K562 (cell line): ENCODE measurements at regions of chr15 and their contacts with region 1.

Region 1: DNA sequence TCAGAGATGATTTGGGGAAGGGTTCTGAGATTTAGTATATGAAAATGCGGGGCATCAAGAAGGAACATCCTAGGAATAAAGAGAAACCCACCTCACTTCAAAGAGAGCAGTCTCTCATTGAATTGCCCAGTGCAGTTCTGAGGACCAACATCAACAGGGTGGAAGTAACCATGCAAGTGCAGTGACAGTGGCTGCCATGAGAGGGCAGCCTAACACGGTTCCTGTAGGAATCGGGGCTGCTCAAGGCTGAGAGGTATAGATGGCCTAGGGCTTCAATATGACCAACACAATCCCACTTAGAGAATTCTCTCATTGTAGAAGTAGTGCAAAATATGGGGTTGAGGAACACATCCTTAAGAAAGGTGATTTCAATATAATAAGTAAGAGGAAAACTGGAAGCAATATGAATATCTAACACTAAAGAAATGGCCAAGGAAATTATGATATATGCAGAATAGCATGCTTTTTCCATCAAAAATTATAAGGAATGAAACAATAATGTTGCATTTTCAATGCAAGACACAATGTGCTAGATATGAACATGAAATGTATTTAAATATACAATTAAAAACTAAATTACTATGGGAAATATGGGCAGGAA is 51.1 kb upstream of the ARRDC4 start:
- DNase-seq: peak; percentile 63 to 76 (median 68)
- ATAC-seq: peak; percentile 99
- H3K4me3 ChIP-seq: no peak overlapping the region
- H3K27ac ChIP-seq: no peak overlapping the region
- H3K4me1 ChIP-seq: no peaks in the 10 kb centered on the region
- H3K27me3 ChIP-seq: peaks cover 18 to 21% of the 10 kb centered on the region in 2 experiments
- CTCF ChIP-seq: peak; percentile 81 to 88 (median 86)
- EP300 ChIP-seq: no peak
- POLR2A ChIP-seq: no peak
- RAD21 ChIP-seq: peak; percentile 85 to 91

Region 2: DNA sequence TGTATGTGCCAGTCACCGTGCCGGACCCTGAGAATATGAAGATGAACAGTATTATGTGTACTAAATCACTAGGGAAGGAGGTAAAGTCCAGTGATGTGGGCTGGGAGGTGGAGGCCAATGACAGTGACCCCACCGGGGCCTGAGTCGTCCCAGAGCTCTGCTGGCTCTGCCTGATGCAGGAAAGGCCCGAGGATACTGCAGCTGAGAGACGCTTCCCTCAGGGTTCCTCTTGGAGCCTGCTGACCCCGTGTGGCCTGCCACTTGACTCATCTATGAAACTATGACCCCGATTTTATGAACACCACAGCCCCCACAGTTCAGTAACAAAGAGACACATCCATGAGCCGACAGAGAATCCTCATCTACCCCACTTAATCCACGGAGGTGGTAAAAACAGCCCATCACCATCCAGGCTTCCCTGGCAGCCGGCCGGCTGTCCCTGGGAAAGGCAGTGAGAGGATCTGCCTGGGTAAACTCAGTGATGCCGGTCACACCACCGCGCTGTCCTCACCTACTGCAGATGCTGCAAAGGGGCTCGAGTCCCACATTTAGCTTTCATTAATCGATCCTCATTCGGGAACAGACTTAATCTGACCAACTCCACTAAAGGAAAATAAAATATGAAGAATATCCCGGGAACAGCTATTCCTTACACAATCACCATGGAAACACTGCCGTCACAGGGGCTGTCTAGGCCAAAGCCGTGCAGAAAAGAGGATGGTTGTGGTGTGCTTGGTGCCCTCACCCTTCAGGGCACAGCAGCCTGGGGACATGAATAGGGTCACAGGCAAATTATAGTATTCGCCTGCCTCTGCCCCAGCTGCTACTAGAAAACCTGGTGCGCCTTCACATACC is 134.0 kb after region 1 on chr15:
- CTCF ChIA-PET with region 1: interaction called, 4 read pairs
- POLR2A ChIA-PET with region 1: no interaction called
- in situ Hi-C with region 1: no loop called
- intact Hi-C with region 1: loop called (anchors 5 kb)
- DNase-seq: peak in 1 of 4 experiments; percentile 4
- ATAC-seq: 0 out of 3 replicates have a peak, but pooled peaks have one; percentile 37
- H3K4me3 ChIP-seq: no peak overlapping the region
- H3K27ac ChIP-seq: no peak overlapping the region
- H3K4me1 ChIP-seq: no peaks in the 10 kb centered on the region
- H3K27me3 ChIP-seq: peaks cover 0 to 6% of the 10 kb centered on the region in 2 experiments; a peak in 3 of 5 replicates
- CTCF ChIP-seq: peak in 2 of 3 experiments; percentile 10 to 21; a peak in 1 of 6 replicates
- EP300 ChIP-seq: no peak
- POLR2A ChIP-seq: no peak
- RAD21 ChIP-seq: peak in 1 of 2 experiments; percentile 37; a peak in 2 of 4 replicates

Region 3: GRCh38 chr15:98177924-98178592 is 268.7 kb after region 1 on chr15:
- CTCF ChIA-PET with region 1: interaction called, 9 read pairs
- POLR2A ChIA-PET with region 1: interaction called, 3 read pairs
- in situ Hi-C with region 1: loop called (anchors 10 kb)
- intact Hi-C with region 1: loop called (anchors 1 kb)
- DNase-seq: peak; percentile 44 to 69 (median 62)
- ATAC-seq: peak; percentile 95
- H3K4me3 ChIP-seq: no peak overlapping the region
- H3K27ac ChIP-seq: no peak overlapping the region
- H3K4me1 ChIP-seq: no peaks in the 10 kb centered on the region
- H3K27me3 ChIP-seq: no peaks in the 10 kb centered on the region
- CTCF ChIP-seq: peak; percentile 75 to 78 (median 75)
- EP300 ChIP-seq: no peak
- POLR2A ChIP-seq: no peak
- RAD21 ChIP-seq: peak; percentile 85 to 90

Region 4: GRCh38 chr15:98421419-98422129 is 512.2 kb after region 1 on chr15:
- CTCF ChIA-PET with region 1: no interaction called
- POLR2A ChIA-PET with region 1: no interaction called
- in situ Hi-C with region 1: loop called (anchors 5 kb)
- intact Hi-C with region 1: loop called (anchors 2 kb)
- DNase-seq: peak; percentile 61 to 90 (median 84)
- ATAC-seq: peak; percentile 97
- H3K4me3 ChIP-seq: no peak overlapping the region
- H3K27ac ChIP-seq: no peak overlapping the region
- H3K4me1 ChIP-seq: peaks cover 0 to 11% of the 10 kb centered on the region in 2 experiments; a peak in 1 of 5 replicates
- H3K27me3 ChIP-seq: peaks cover 4 to 41% of the 10 kb centered on the region in 2 experiments; a peak in 4 of 5 replicates
- CTCF ChIP-seq: peak; percentile 85 to 91 (median 88)
- EP300 ChIP-seq: no peak
- POLR2A ChIP-seq: no peak
- RAD21 ChIP-seq: peak; percentile 57 to 80